ENCODE measurements at regions of chr5 and their contacts with region 1.

Region 1: GRCh38 chr5:138077065-138077696 is 6.7 kb upstream of the WNT8A start:
- DNase-seq: peak; percentile 58 to 63
- H3K4me3 ChIP-seq: no peak overlapping the region
- H3K27ac ChIP-seq: no peak overlapping the region
- H3K4me1 ChIP-seq: no peaks in the 10 kb centered on the region
- H3K27me3 ChIP-seq: no peaks in the 10 kb centered on the region
- CTCF ChIP-seq: peak; percentile 76 to 87 (median 79)
- POLR2A ChIP-seq: no peak

Region 2: DNA sequence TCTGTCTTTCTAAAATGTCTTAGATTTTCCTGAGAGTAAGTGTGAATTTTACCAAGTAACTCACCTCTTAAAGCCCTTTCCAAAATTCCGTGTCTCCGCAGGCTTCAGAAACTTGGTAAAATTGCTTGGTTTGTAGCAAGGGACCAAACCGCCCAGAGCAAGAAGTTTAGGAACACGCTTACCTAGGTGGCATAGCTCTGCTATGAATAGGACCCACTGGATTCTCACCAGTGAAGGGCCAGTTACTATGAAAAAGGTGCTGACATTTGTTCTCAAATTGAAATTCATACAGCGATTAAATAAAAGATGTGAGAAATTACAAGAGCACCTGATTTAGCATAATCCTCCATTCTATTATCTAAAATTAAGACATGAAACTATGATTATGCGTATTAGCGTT is 55.4 kb after region 1 on chr5:
- intact Hi-C with region 1: loop called (anchors 5 kb)
- DNase-seq: no peak
- H3K4me3 ChIP-seq: peak overlapping the region in 1 of 2 donors; percentile 33
- H3K27ac ChIP-seq: no peak overlapping the region
- H3K4me1 ChIP-seq: no peaks in the 10 kb centered on the region
- H3K27me3 ChIP-seq: no peaks in the 10 kb centered on the region
- CTCF ChIP-seq: no peak
- POLR2A ChIP-seq: no peak